HEK293T (cell line): ENCODE measurements at regions of chr5 and their contacts with region 1.

Region 1: DNA sequence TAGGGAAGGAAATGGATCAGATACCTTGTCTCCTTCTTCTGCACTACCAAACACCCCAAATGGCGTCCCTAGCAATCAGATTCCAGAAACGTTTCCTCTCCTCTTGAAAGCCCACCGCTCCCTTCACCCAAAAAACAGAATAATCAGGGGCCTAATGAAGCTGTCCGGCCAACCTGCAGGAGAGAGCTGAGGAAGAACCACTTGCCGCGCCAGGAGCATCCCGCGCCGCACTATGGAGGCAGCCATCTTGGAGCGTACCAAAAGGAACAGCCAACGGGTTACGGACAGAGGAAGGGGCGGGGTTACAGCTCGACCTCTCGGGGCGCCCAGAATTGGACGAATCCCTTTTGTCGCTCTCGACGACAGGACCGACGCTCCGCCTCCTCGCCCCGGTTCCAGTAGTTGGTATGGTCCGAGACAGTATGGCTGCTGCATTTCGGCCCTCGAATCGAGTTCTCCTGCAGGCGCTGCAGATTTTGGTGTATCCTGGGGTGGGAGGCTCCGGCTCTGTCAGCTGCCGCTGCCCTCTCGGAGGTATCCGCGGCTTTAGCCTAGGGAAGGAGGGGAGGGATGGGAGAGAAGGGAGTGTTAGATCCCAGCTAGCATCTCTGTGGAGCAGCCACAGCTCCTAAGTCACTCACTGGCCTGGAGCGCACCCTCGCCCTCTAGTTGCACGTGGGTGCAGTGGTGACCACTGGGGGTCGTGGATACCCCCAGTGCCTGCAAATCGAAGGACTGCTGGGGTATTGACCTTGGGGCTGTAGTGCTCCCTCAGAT is at the starts of genes MRPS27 and PTCD2:
- DNase-seq: peak; percentile 98

Region 2: GRCh38 chr5:72307968-72308852 is 12.0 kb before region 1 on chr5:
- CTCF ChIA-PET with region 1: interaction called, 3 read pairs
- POLR2A ChIA-PET with region 1: interaction called, 15 read pairs
- DNase-seq: peak; percentile 92